Naive thymus-derived CD8-positive, alpha-beta T cell (primary cell): ENCODE measurements at regions of chr17 and their contacts with region 1.

Region 1: GRCh38 chr17:16285957-16286640 is 67.2 kb downstream of the CENPV start:
- DNase-seq: peak; percentile 21 to 83 (median 66)
- ATAC-seq: peak; percentile 92 to 95
- H3K4me3 Mint-ChIP-seq: peak overlapping the region; percentile 67 to 85 (median 80)
- H3K27ac Mint-ChIP-seq: peak overlapping the region; percentile 95 to 99 (median 98)
- H3K4me1 Mint-ChIP-seq: peaks cover 30 to 66% (median 60%) of the 10 kb centered on the region in 4 donors
- H3K27me3 Mint-ChIP-seq: no peaks in the 10 kb centered on the region

Region 2: DNA sequence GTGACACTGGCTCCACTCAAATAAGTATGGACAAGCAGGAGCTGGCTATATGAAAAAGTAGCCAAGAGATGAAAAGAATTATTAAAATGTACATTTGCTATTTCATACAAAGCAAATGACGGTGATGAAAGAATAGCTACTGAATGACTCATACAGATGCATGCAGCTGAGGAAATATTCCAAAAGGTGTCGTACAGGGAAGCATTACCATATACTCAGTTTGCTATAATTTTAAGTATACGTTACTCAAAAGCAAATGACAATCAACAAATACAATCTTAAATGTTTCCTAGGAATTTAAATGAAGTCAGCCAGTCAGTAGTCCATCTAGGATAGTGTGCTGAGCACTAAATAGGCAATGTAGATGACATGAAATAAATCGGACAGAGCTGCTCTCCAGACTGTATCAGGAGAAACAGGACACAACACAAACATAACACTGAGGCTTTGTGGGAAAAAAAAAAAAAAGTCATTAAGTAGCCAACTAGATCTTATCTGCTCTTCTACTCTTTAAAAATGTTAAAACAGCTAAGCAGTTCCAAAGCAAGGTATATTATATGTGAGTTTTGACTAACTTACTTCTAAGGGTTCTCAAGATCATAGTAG is 135.7 kb before region 1 on chr17:
- POLR2A ChIA-PET with region 1: no interaction called
- DNase-seq: no peak
- ATAC-seq: no peak
- H3K4me3 Mint-ChIP-seq: no peak overlapping the region
- H3K27ac Mint-ChIP-seq: no peak overlapping the region
- H3K4me1 Mint-ChIP-seq: peaks cover 0 to 3% (median 0%) of the 10 kb centered on the region in 4 donors
- H3K27me3 Mint-ChIP-seq: no peaks in the 10 kb centered on the region

Region 3: DNA sequence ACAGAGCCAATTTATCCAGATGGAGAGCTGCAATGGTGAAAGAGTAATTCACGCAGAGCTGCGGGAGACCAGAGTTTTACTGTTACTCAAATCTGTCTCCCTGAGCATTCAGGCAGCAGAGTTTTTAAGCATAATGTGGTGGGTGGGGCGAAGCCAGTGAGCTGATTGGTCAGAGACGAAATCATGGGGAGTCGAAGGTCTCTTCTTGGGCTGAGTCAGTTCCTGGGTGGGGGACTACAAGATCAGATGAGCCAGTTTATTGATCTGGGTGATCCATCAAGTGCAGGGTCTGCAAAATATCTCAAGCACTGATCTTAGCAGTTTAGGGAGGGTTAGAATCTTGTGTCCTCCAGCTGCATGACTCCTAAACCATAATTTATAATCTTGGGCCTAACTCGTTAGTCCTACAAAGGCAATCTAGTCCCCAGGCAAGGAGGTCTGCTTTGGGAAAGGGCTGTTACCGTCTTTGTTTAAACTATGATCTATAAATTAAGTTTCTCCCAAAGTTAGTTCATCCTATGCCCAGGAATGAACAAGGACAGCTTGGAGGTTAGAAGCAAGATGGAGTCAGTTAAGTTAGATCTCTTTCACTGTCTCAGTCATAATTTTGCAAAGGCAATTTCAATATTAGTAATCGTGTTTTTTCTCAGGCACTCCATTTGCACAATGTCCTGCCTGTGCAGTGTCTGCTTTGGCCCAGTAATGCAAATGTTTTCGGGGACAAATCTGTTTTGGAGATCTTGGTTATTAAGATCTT is 42.1 kb before region 1 on chr17:
- POLR2A ChIA-PET with region 1: no interaction called
- DNase-seq: no peak
- ATAC-seq: no peak
- H3K4me3 Mint-ChIP-seq: no peak overlapping the region
- H3K27ac Mint-ChIP-seq: peak overlapping the region in 2 of 10 donors; percentile 38 to 41
- H3K4me1 Mint-ChIP-seq: peaks cover 7 to 17% (median 14%) of the 10 kb centered on the region in 4 donors
- H3K27me3 Mint-ChIP-seq: no peaks in the 10 kb centered on the region

Region 4: GRCh38 chr17:16258901-16259300 is 27.2 kb before region 1 on chr17:
- POLR2A ChIA-PET with region 1: no interaction called
- DNase-seq: no peak
- ATAC-seq: no peak
- H3K4me3 Mint-ChIP-seq: no peak overlapping the region
- H3K27ac Mint-ChIP-seq: no peak overlapping the region
- H3K4me1 Mint-ChIP-seq: peaks cover 4 to 12% (median 8%) of the 10 kb centered on the region in 4 donors
- H3K27me3 Mint-ChIP-seq: no peaks in the 10 kb centered on the region

Region 5: GRCh38 chr17:16275024-16275423 is 11.1 kb before region 1 on chr17:
- POLR2A ChIA-PET with region 1: no interaction called
- DNase-seq: no peak
- ATAC-seq: no peak
- H3K4me3 Mint-ChIP-seq: no peak overlapping the region
- H3K27ac Mint-ChIP-seq: no peak overlapping the region
- H3K4me1 Mint-ChIP-seq: peaks cover under 1 to 11% (median 5%) of the 10 kb centered on the region in 4 donors
- H3K27me3 Mint-ChIP-seq: no peaks in the 10 kb centered on the region

Region 6: GRCh38 chr17:16353317-16354174 is 67.4 kb after region 1 on chr17 and contains the start of gene CENPV:
- POLR2A ChIA-PET with region 1: interaction called, 12 read pairs
- DNase-seq: peak; percentile 63 to 85 (median 76)
- ATAC-seq: peak; percentile 86 to 88
- H3K4me3 Mint-ChIP-seq: peak within 1 kb of the TSS; percentile 86 to 97 (median 93)
- H3K27ac Mint-ChIP-seq: peak within 1 kb of the TSS; percentile 74 to 94 (median 90)
- H3K4me1 Mint-ChIP-seq: peaks cover 9 to 27% (median 20%) of the 10 kb centered on the region in 4 donors
- H3K27me3 Mint-ChIP-seq: no peaks in the 10 kb centered on the region
- polyA plus RNA-seq, gene CENPV: 24.7 to 30.9 (median 28.3) TPM